Ascending aorta (tissue), 2 donors: ENCODE measurements at regions of chr4 and their contacts with region 1.

Region 1: GRCh38 chr4:10164877-10165283 is 48.3 kb upstream of the WDR1 start:
- DNase-seq: no peak
- H3K4me3 ChIP-seq: no peak overlapping the region
- H3K27ac ChIP-seq: no peak overlapping the region
- H3K4me1 ChIP-seq: no peaks in the 10 kb centered on the region
- H3K27me3 ChIP-seq: no peaks in the 10 kb centered on the region
- CTCF ChIP-seq: peak; percentile 44 to 69 (median 44)

Region 2: DNA sequence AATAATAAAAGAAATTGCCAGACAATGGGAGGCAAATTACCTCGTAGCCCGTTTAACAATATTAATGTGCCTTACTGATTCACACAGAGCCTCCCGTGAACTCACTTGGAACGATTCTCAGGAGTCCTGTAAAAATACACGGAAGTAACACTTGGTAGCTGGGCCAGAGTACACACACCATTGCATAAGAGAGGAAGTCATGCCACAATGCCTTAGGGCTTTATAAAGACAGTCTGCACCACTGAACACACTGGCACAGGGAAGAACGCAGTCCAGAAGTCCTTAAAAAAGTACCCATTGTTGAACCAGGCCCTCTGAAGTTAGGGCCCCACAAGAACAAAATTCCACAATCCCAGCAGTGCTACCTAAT is 158.7 kb before region 1 on chr4:
- intact Hi-C with region 1: no loop called
- DNase-seq: peak in 1 of 2 donors; percentile 85
- H3K4me3 ChIP-seq: no peak overlapping the region
- H3K27ac ChIP-seq: peak overlapping the region; percentile 58 to 77
- H3K4me1 ChIP-seq: peaks cover 17 to 35% of the 10 kb centered on the region in 2 donors
- H3K27me3 ChIP-seq: no peaks in the 10 kb centered on the region
- CTCF ChIP-seq: no peak

Region 3: GRCh38 chr4:10116580-10117358 is 48.1 kb before region 1 on chr4 and contains the start of gene WDR1:
- intact Hi-C with region 1: no loop called
- DNase-seq: peak; percentile 86 to 98
- H3K4me3 ChIP-seq: peak within 1 kb of the TSS; percentile 61 to 82
- H3K27ac ChIP-seq: peak within 1 kb of the TSS; percentile 93 to 95
- H3K4me1 ChIP-seq: peaks cover 19 to 43% of the 10 kb centered on the region in 2 donors
- H3K27me3 ChIP-seq: no peaks in the 10 kb centered on the region
- CTCF ChIP-seq: peak in 1 of 3 experiments; percentile 4
- total RNA-seq, gene WDR1: 216 TPM

Region 4: GRCh38 chr4:10403633-10404445 is 239.0 kb after region 1 on chr4:
- intact Hi-C with region 1: loop called (anchors 2 kb)
- DNase-seq: no peak
- H3K4me3 ChIP-seq: no peak overlapping the region
- H3K27ac ChIP-seq: no peak overlapping the region
- H3K4me1 ChIP-seq: no peaks in the 10 kb centered on the region
- H3K27me3 ChIP-seq: no peaks in the 10 kb centered on the region
- CTCF ChIP-seq: peak; percentile 38 to 64 (median 40)